ENCODE measurements at regions of chr1 and their contacts with region 1.

Region 1: DNA sequence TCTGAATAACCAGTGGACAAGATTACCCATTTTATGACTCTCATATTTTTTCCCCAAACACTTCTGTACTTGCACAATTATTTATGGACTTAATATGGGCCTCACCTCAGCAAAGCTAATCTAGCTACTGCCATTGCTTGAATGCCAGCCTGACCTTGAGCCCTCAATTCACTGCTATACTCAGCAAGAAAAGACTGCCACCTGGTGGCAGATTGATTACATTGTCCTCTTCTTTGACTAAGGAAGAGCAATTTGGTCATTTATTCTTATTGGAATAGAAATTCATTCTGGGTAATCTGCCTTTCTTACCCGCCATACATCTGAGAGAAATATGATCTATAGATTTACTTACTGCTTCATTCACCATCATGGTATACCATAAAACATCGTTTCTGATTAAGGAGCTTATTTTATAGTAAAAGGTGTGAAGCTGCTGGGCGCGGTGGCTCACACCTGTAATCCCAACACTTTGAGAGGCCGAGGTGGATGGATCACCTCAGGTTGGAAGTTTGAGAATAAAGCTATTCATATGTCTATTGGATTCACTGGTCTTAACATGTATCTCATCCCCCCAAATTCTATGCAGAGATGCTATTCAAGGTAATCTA is 32.9 kb upstream of the DIPK1A start:
- DNase-seq: peak; percentile 79
- ATAC-seq: peak; percentile 83
- H3K4me3 Mint-ChIP-seq: no peak overlapping the region
- H3K27ac Mint-ChIP-seq: no peak overlapping the region
- H3K4me1 Mint-ChIP-seq: peaks cover 35% of the 10 kb centered on the region
- H3K27me3 Mint-ChIP-seq: no peaks in the 10 kb centered on the region

Region 2: GRCh38 chr1:92843429-92844352 is 150.5 kb before region 1 on chr1:
- CTCF ChIA-PET with region 1: interaction called, 12 read pairs
- POLR2A ChIA-PET with region 1: no interaction called
- intact Hi-C with region 1: no loop called
- DNase-seq: no peak
- ATAC-seq: no peak
- H3K4me3 Mint-ChIP-seq: no peak overlapping the region
- H3K27ac Mint-ChIP-seq: peak overlapping the region; percentile 37
- H3K4me1 Mint-ChIP-seq: peaks cover 16% of the 10 kb centered on the region
- H3K27me3 Mint-ChIP-seq: no peaks in the 10 kb centered on the region

Region 3: GRCh38 chr1:92877792-92878191 is 116.4 kb before region 1 on chr1:
- CTCF ChIA-PET with region 1: interaction called, 15 read pairs
- POLR2A ChIA-PET with region 1: no interaction called
- intact Hi-C with region 1: no loop called
- DNase-seq: no peak
- ATAC-seq: peak; percentile 60
- H3K4me3 Mint-ChIP-seq: peak overlapping the region; percentile 56
- H3K27ac Mint-ChIP-seq: peak overlapping the region; percentile 83
- H3K4me1 Mint-ChIP-seq: peaks cover 33% of the 10 kb centered on the region
- H3K27me3 Mint-ChIP-seq: no peaks in the 10 kb centered on the region

Region 4: DNA sequence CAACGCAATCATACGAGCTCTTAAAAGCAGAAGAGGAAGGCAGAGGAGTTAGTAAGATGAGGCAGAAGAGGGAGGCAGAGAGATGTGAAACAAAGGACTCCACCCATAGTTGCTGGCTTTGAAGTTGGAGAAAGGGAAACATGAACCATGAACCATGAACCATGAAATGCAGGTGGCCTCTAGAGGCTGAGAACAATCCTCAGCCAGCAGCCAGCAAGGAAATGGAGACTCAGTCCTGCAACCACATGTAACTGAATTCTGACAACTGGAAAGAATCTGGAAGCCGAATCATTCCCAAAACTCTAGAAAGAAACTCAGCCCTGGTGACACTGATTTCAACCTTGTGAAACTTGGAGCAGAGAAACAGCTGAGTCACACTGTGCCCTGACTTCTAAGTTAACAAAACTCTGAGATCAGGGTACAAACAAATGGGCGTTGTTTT is 43.0 kb before region 1 on chr1:
- CTCF ChIA-PET with region 1: interaction called, 130 read pairs
- POLR2A ChIA-PET with region 1: no interaction called
- intact Hi-C with region 1: no loop called
- DNase-seq: peak; percentile 37
- ATAC-seq: peak; percentile 77
- H3K4me3 Mint-ChIP-seq: no peak overlapping the region
- H3K27ac Mint-ChIP-seq: no peak overlapping the region
- H3K4me1 Mint-ChIP-seq: peaks cover 42% of the 10 kb centered on the region
- H3K27me3 Mint-ChIP-seq: no peaks in the 10 kb centered on the region

Region 5: GRCh38 chr1:92975551-92976232 is 18.5 kb before region 1 on chr1:
- CTCF ChIA-PET with region 1: interaction called, 109 read pairs
- POLR2A ChIA-PET with region 1: interaction called, 4 read pairs
- intact Hi-C with region 1: loop called in 1 of 2 experiments (anchors 1 kb)
- DNase-seq: peak; percentile 24
- ATAC-seq: peak; percentile 32
- H3K4me3 Mint-ChIP-seq: no peak overlapping the region
- H3K27ac Mint-ChIP-seq: peak overlapping the region; percentile 35
- H3K4me1 Mint-ChIP-seq: peaks cover 69% of the 10 kb centered on the region
- H3K27me3 Mint-ChIP-seq: no peaks in the 10 kb centered on the region

Region 6: DNA sequence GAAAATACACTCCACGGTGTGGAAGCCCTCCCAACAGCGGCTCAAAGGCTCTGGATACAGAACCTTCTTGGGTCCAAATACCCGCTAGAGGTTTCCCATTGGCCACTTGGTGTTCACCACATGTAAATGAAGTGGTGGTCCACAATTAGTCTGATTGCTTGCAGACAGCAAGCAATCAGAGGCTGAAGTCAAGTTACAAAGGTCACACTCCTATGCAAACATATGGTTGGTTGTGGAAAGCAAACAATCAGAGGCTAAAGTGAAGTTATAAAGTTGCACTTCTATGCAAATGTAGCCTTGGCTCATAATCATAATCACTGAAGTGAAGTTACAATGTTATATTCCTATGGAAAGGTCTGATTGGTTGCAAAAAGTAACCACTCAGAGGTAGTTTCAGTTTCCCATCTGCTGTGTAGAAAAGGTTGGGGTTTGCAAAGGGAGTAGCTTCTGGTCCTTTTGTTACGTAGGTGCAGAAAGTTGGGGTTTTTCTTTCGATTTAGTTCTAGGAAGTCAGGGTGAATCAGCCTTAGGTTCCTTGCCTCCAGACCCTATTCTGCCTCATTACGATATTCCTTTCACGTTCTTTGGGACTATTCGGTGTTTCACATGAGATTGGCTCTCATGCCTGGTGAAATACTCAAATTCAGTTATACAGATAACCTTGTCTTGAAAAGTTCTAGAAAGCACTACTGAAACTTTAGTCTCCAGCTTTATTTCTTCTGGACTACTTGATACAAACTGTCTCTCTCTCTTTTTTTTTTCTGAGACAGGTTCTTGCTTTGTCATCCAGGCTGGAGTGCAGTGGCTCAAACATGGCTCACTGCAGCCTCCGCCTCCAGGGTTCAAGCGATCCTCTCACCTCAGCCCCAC is 48.2 kb after region 1 on chr1:
- CTCF ChIA-PET with region 1: no interaction called
- POLR2A ChIA-PET with region 1: no interaction called
- intact Hi-C with region 1: no loop called
- DNase-seq: peak; percentile 20
- ATAC-seq: peak; percentile 98
- H3K4me3 Mint-ChIP-seq: peak overlapping the region; percentile 56
- H3K27ac Mint-ChIP-seq: peak overlapping the region; percentile 92
- H3K4me1 Mint-ChIP-seq: peaks cover 30% of the 10 kb centered on the region
- H3K27me3 Mint-ChIP-seq: no peaks in the 10 kb centered on the region

Region 7: DNA sequence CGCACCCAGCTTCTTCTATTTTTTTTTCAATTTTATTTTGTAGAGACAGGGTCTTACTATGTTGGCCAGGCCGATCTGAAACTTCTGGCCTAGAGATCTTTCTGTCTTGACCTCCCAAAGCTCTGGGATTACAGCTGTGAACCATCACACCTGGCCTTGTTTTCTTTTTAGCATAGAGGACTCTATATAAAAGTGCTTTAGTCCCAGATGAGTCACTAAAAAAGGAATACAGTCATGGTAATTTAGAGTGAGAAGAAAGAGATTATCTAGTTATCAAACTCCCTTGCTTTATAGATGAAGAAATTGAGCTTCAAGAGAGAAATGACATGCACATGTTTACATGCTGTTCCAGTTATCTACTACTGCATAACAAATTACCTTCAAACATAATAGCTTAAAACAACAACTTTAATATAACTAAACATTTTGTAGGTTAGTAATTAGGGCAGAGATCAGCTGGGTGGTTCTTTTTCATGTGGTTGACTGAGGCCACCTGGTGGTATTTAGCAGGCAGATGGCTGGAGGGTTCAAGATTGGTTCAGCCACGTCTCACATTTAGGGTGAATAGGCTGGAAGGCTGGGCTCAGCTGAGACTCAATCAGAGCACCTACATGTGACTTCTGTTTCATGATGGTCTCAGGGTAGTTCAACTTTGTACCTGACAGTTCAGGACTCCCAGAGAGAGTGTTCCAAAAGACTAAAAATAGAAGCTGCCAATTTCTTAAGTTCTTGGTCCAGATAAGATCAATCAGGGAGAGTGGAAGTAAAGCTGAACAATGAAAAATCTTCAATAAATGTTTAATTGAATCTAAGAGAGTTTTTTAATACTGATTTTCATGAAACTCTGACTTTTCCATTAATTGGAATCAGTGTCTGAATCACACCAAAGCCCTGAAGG is 67.9 kb after region 1 on chr1:
- CTCF ChIA-PET with region 1: interaction called, 12 read pairs
- POLR2A ChIA-PET with region 1: no interaction called
- intact Hi-C with region 1: no loop called
- DNase-seq: peak; percentile 63
- ATAC-seq: peak; percentile 89
- H3K4me3 Mint-ChIP-seq: no peak overlapping the region
- H3K27ac Mint-ChIP-seq: no peak overlapping the region
- H3K4me1 Mint-ChIP-seq: no peaks in the 10 kb centered on the region
- H3K27me3 Mint-ChIP-seq: peaks cover 10% of the 10 kb centered on the region

Measured in activated CD4-positive, alpha-beta T cell treated with anti-CD3 and anti-CD28 coated beads for 36 hours (primary cell).